CD8-positive, alpha-beta T cell (primary cell): ENCODE measurements at regions of chr7 and their contacts with region 1.

Region 1: GRCh38 chr7:35537067-35538023 is 157.6 kb downstream of the HERPUD2 start:
- DNase-seq: peak; percentile 63 to 87 (median 79)
- ATAC-seq: peak; percentile 98
- H3K4me3 ChIP-seq: peak overlapping the region; percentile 35 to 36
- H3K4me3 Mint-ChIP-seq: peak overlapping the region; percentile 87
- H3K27ac ChIP-seq: no peak overlapping the region
- H3K27ac Mint-ChIP-seq: no peak overlapping the region
- H3K4me1 ChIP-seq: no peaks in the 10 kb centered on the region
- H3K4me1 Mint-ChIP-seq: peaks cover 2% of the 10 kb centered on the region
- H3K27me3 ChIP-seq: no peaks in the 10 kb centered on the region
- H3K27me3 Mint-ChIP-seq: peaks cover 12% of the 10 kb centered on the region
- CTCF ChIP-seq: peak; percentile 94

Region 2: GRCh38 chr7:34321000-34321581 is 1216.3 kb before region 1 on chr7:
- CTCF ChIA-PET with region 1: no interaction called
- POLR2A ChIA-PET with region 1: no interaction called
- intact Hi-C with region 1: loop called in 1 of 2 experiments (anchors 10 kb)
- DNase-seq: peak in 8 of 9 experiments; percentile 11 to 53 (median 28)
- ATAC-seq: no peak
- H3K4me3 ChIP-seq: peak overlapping the region in 1 of 2 experiments; percentile 25
- H3K4me3 Mint-ChIP-seq: no peak overlapping the region
- H3K27ac ChIP-seq: no peak overlapping the region
- H3K27ac Mint-ChIP-seq: no peak overlapping the region
- H3K4me1 ChIP-seq: no peaks in the 10 kb centered on the region
- H3K4me1 Mint-ChIP-seq: peaks cover 5% of the 10 kb centered on the region
- H3K27me3 ChIP-seq: no peaks in the 10 kb centered on the region
- H3K27me3 Mint-ChIP-seq: peaks cover 16% of the 10 kb centered on the region
- CTCF ChIP-seq: peak; percentile 68

Region 3: GRCh38 chr7:35037526-35038339 is 499.6 kb before region 1 on chr7:
- CTCF ChIA-PET with region 1: no interaction called
- POLR2A ChIA-PET with region 1: no interaction called
- intact Hi-C with region 1: loop called in 1 of 2 experiments (anchors 1 kb)
- DNase-seq: peak; percentile 76 to 96 (median 90)
- ATAC-seq: peak; percentile 71
- H3K4me3 ChIP-seq: peak overlapping the region; percentile 44 to 66
- H3K4me3 Mint-ChIP-seq: peak overlapping the region; percentile 89
- H3K27ac ChIP-seq: peak overlapping the region; percentile 26 to 49
- H3K27ac Mint-ChIP-seq: peak overlapping the region; percentile 80
- H3K4me1 ChIP-seq: peaks cover 25% of the 10 kb centered on the region
- H3K4me1 Mint-ChIP-seq: peaks cover 32% of the 10 kb centered on the region
- H3K27me3 ChIP-seq: no peaks in the 10 kb centered on the region
- H3K27me3 Mint-ChIP-seq: no peaks in the 10 kb centered on the region
- CTCF ChIP-seq: peak; percentile 74

Region 4: GRCh38 chr7:35424869-35425495 is 112.4 kb before region 1 on chr7:
- CTCF ChIA-PET with region 1: interaction called, 7 read pairs
- POLR2A ChIA-PET with region 1: no interaction called
- intact Hi-C with region 1: loop called (anchors 1 to 2 kb)
- DNase-seq: peak; percentile 9 to 74 (median 56)
- ATAC-seq: peak; percentile 86
- H3K4me3 ChIP-seq: no peak overlapping the region
- H3K4me3 Mint-ChIP-seq: no peak overlapping the region
- H3K27ac ChIP-seq: no peak overlapping the region
- H3K27ac Mint-ChIP-seq: no peak overlapping the region
- H3K4me1 ChIP-seq: no peaks in the 10 kb centered on the region
- H3K4me1 Mint-ChIP-seq: no peaks in the 10 kb centered on the region
- H3K27me3 ChIP-seq: no peaks in the 10 kb centered on the region
- H3K27me3 Mint-ChIP-seq: peaks cover 25% of the 10 kb centered on the region
- CTCF ChIP-seq: peak; percentile 75